HCT116 (cell line): ENCODE measurements at regions of chr15 and their contacts with region 1.

Region 1: GRCh38 chr15:65787260-65787659 is 4.8 kb downstream of the DENND4A start:
- DNase-seq: no peak
- ATAC-seq: no peak
- H3K4me3 ChIP-seq: peak overlapping the region in 1 of 2 experiments; percentile 42; a peak in 2 of 4 replicates
- H3K27ac ChIP-seq: peak overlapping the region; percentile 45; the same call in 1 of the 2 replicates
- H3K4me1 ChIP-seq: peaks cover 19 to 29% of the 10 kb centered on the region in 2 experiments
- H3K27me3 ChIP-seq: no peaks in the 10 kb centered on the region
- CTCF ChIP-seq: no peak
- POLR2A ChIP-seq: no peak
- RAD21 ChIP-seq: no peak

Region 2: DNA sequence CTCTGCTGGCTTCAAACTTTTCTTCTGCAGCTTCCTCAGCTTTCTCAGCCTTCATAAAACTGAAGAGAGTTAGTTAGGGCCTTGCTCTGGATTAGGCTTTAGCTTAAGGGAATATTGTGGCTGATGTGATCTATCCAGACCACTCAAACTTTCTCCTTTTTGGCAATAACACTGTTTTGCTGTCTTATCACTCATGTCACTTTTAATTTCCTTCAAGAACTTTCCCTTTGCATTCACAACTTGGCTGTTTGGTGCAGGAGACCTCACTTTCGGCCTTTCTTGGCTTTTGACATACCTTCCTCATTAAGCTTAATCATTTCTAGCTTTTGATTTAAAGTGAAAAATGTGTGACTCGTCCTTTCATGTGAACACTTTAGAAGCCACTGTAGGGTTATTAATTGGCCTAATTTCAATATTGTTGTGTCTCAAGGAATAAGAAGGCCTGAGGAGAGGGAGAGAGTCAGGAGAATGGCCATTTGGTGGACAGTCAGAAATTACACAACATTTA is 104.8 kb before region 1 on chr15:
- CTCF ChIA-PET with region 1: no interaction called
- POLR2A ChIA-PET with region 1: no interaction called
- RAD21 ChIA-PET with region 1: no interaction called
- intact Hi-C with region 1: no loop called
- DNase-seq: no peak
- ATAC-seq: no peak
- H3K4me3 ChIP-seq: no peak overlapping the region
- H3K27ac ChIP-seq: no peak overlapping the region
- H3K4me1 ChIP-seq: no peaks in the 10 kb centered on the region
- H3K27me3 ChIP-seq: no peaks in the 10 kb centered on the region
- CTCF ChIP-seq: no peak
- POLR2A ChIP-seq: no peak
- RAD21 ChIP-seq: no peak

Region 3: DNA sequence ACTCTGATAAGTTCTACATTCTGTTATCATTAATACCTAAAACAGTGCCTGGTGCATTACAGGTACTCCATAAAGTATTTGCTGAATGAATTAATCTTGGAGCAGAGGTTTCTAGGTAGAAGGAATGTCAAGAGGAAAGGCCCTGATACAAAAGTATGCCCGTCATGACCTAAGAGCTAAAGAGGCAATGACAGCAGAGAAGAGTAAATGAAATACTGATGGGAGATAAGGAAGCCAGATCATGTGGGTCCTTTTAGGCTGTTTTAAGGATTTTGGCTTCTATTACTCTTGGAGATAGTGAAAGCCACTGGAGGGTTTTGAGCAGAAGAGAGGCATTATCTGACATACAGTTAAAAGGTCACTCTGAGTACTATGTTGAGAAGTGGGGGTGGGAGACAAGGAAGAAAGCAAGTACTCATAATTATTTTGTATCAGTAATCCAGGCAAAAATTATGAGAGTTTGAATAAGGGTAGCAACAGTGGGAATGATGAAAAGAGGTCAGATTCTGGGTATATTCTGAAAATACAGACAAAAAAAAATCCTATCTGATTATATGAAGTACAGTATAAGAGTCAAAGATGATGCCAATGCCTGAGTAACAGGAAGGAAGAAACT is 43.5 kb before region 1 on chr15:
- CTCF ChIA-PET with region 1: no interaction called
- POLR2A ChIA-PET with region 1: no interaction called
- RAD21 ChIA-PET with region 1: no interaction called
- intact Hi-C with region 1: loop called (anchors 1 kb)
- DNase-seq: no peak
- ATAC-seq: no peak
- H3K4me3 ChIP-seq: no peak overlapping the region
- H3K27ac ChIP-seq: no peak overlapping the region
- H3K4me1 ChIP-seq: no peaks in the 10 kb centered on the region
- H3K27me3 ChIP-seq: no peaks in the 10 kb centered on the region
- CTCF ChIP-seq: no peak
- POLR2A ChIP-seq: no peak
- RAD21 ChIP-seq: no peak